Thyroid gland (tissue), 4 donors: ENCODE measurements at regions of chr11 and their contacts with region 1.

Region 1: GRCh38 chr11:133082851-133083488 is 449.3 kb downstream of the OPCML start:
- DNase-seq: peak; percentile 65 to 66
- H3K4me3 ChIP-seq: peak overlapping the region in 1 of 3 donors; percentile 26
- H3K27ac ChIP-seq: no peak overlapping the region
- H3K4me1 ChIP-seq: peaks cover 4 to 5% of the 10 kb centered on the region in 2 donors
- H3K27me3 ChIP-seq: no peaks in the 10 kb centered on the region
- CTCF ChIP-seq: peak; percentile 12 to 100 (median 88)
- POLR2A ChIP-seq: no peak

Region 2: GRCh38 chr11:133163463-133164419 is 80.8 kb after region 1 on chr11:
- intact Hi-C with region 1: loop called (anchors 10 kb)
- DNase-seq: no peak
- H3K4me3 ChIP-seq: no peak overlapping the region
- H3K27ac ChIP-seq: no peak overlapping the region
- H3K4me1 ChIP-seq: no peaks in the 10 kb centered on the region
- H3K27me3 ChIP-seq: no peaks in the 10 kb centered on the region
- CTCF ChIP-seq: peak; percentile 42 to 69 (median 58)
- POLR2A ChIP-seq: no peak

Region 3: GRCh38 chr11:133834682-133835592 is 752.0 kb after region 1 on chr11:
- intact Hi-C with region 1: loop called (anchors 5 kb)
- DNase-seq: peak; percentile 39 to 51
- H3K4me3 ChIP-seq: no peak overlapping the region
- H3K27ac ChIP-seq: no peak overlapping the region
- H3K4me1 ChIP-seq: no peaks in the 10 kb centered on the region
- H3K27me3 ChIP-seq: no peaks in the 10 kb centered on the region
- CTCF ChIP-seq: peak in 4 of 6 experiments; percentile 32 to 86 (median 58)
- POLR2A ChIP-seq: no peak